Left lung (tissue), 14 donors: ENCODE measurements at regions of chr5 and their contacts with region 1.

Region 1: GRCh38 chr5:111550279-111551020 is 38.1 kb upstream of the STARD4 start:
- DNase-seq: peak in 3 of 4 donors; percentile 60 to 88 (median 81)
- ATAC-seq: peak; percentile 96
- H3K4me3 ChIP-seq: no peak overlapping the region
- H3K27ac ChIP-seq: peak overlapping the region; percentile 45 to 66
- H3K4me1 ChIP-seq: peaks cover 0 to 19% of the 10 kb centered on the region in 2 donors
- H3K27me3 ChIP-seq: no peaks in the 10 kb centered on the region
- CTCF ChIP-seq: peak; percentile 55 to 60

Region 2: GRCh38 chr5:111635151-111635902 is 84.9 kb after region 1 on chr5:
- intact Hi-C with region 1: no loop called
- DNase-seq: no peak
- ATAC-seq: peak; percentile 16
- H3K4me3 ChIP-seq: no peak overlapping the region
- H3K27ac ChIP-seq: no peak overlapping the region
- H3K4me1 ChIP-seq: no peaks in the 10 kb centered on the region
- H3K27me3 ChIP-seq: no peaks in the 10 kb centered on the region
- CTCF ChIP-seq: no peak

Region 3: DNA sequence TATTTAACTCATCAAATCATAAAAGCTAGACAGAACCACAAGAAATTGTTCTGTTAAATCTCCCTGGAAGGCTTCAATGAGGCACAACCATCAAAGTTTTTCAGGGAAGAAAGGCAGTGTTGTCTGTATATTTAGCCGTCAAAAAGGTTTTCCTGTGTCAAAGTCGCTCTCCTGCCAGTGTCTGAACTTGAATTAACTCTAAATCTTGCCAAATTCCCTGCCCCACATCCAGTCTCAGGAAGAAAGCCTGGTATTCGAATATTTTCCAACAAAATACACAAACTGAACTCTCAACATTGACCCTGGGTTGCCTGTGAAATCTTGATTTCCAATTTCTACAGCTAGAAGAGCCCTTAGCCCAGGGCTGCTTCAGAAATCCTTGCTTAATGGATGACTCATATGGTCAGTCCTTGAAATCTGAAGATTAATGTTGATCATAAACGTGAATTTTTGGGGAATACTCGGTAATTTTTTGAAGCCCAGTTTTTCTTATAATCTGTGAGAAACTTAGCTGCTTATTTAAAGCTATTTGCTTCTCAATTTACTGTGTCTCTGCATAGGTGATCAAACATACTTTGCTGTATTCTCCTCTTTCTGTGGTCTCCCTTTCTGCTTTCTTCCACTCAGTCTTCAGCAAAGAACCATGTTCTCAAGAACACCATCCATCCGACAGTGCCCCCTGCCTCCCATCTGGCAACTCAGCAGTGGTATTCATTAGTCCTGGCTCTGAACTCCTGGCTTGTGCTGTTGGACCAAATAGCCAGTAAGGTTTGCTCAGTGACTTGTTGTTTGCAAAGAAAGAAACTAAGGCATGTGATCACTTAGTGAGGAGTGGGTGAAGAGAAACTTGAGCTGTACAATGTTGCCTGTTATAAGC is 147.7 kb after region 1 on chr5:
- intact Hi-C with region 1: no loop called
- DNase-seq: no peak
- ATAC-seq: peak; percentile 71
- H3K4me3 ChIP-seq: no peak overlapping the region
- H3K27ac ChIP-seq: peak overlapping the region in 1 of 2 donors; percentile 14
- H3K4me1 ChIP-seq: peaks cover 12 to 15% of the 10 kb centered on the region in 2 donors
- H3K27me3 ChIP-seq: no peaks in the 10 kb centered on the region
- CTCF ChIP-seq: no peak

Region 4: GRCh38 chr5:111757355-111758283 is 207.2 kb after region 1 on chr5:
- intact Hi-C with region 1: loop called in 1 of 2 experiments (anchors 10 kb)
- DNase-seq: peak; percentile 94 to 97 (median 96)
- ATAC-seq: peak; percentile 88
- H3K4me3 ChIP-seq: peak overlapping the region; percentile 57 to 60
- H3K27ac ChIP-seq: peak overlapping the region; percentile 92 to 93
- H3K4me1 ChIP-seq: peaks cover 0 to 30% of the 10 kb centered on the region in 2 donors
- H3K27me3 ChIP-seq: no peaks in the 10 kb centered on the region
- CTCF ChIP-seq: peak; percentile 16 to 28

Region 5: DNA sequence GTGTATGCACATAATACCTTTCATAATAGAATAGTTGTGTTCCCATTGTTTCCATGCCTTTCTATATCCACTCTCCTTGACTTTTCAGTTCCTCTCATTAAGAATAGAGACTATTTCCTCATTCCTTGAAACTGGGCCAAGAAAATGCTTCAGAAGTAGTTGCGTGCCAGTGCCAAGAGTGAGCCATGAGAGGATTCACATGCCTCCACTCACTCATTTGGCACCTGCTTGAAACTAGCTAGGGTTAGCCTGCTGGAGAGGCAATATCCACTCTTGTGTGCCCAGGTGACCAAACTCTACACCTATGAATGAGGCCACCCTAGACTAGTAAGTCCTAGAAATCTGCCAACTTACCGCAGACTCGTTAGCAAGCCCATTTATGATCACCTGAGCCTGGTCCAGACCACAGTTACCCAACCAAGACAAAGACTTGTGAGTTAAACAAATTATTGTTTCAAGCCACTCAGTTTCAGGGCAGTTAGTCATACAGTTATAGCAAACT is 592.4 kb after region 1 on chr5:
- intact Hi-C with region 1: loop called in 1 of 2 experiments (anchors 5 kb)
- DNase-seq: peak in 3 of 4 donors; percentile 54 to 78 (median 63)
- ATAC-seq: peak; percentile 86
- H3K4me3 ChIP-seq: no peak overlapping the region
- H3K27ac ChIP-seq: no peak overlapping the region
- H3K4me1 ChIP-seq: peaks cover 0 to 6% of the 10 kb centered on the region in 2 donors
- H3K27me3 ChIP-seq: no peaks in the 10 kb centered on the region
- CTCF ChIP-seq: no peak